GM13976 (cell line): ENCODE measurements at regions of chr17 and their contacts with region 1.

Region 1: GRCh38 chr17:27455914-27456680 is at the start of gene KSR1:
- DNase-seq: peak; percentile 94
- CTCF ChIP-seq: peak; percentile 30

Region 2: DNA sequence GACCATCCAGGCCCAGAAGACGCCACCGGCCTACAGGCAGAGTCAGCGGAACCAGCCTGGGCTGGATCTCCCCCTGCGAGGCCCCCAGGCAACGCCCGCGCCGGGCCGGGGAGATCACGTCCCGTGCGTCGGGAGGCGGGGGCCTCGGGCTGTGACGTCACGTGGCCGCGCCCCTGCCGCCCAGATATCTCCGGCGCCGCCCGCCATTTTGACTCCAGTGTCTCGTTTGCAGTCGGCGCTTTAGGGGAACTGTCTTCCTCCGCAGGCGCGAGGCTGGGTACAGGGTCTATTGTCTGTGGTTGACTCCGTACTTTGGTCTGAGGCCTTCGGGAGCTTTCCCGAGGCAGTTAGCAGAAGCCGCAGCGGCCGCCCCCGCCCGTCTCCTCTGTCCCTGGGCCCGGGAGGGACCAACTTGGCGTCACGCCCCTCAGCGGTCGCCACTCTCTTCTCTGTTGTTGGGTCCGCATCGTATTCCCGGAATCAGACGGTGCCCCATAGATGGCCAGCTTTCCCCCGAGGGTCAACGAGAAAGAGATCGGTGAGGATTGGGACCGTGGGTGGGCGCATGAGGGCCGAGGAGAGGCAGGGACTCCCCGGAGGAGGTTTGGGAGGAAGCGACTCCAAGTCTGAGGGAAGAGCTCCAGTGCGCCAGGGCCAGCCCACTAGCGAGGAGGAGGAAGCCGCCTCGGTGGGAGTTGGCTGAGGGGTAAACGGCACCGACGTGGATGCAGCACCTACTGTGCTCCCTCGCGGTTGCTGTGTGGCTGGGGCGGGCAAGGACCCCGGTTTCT is 162.0 kb before region 1 on chr17 and contains the start of gene WSB1:
- in situ Hi-C with region 1: loop called (anchors 25 kb)
- DNase-seq: peak; percentile 97
- CTCF ChIP-seq: peak; percentile 8

Region 3: DNA sequence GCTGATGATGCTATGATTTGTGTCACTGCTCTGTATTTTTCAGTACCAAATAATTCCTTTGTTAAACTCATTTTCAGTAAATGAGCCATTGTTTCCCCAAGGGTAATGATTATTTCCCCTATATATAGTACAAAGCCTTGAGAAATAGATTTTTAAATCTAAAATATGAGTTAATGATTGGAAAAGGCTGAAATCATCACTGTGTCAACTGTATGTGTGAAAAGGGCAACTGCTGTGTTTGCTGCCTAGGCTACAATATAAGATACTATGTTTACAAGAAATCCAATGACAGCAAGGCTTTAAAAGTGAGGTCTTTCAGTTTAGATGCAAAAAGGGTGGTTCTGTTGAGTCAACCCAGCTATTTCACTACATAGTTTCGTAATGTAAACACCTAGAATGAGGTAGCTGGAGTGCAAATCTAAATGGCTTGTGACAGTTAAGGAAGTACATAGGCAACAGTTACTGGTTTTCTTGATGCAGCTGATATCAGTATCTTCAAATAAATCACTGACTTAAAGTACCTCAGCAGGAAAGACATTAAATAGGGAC is 601.7 kb after region 1 on chr17:
- in situ Hi-C with region 1: loop called (anchors 25 kb)
- DNase-seq: peak; percentile 63
- CTCF ChIP-seq: no peak